ENCODE measurements at regions of chr2 and their contacts with region 1.

Region 1: DNA sequence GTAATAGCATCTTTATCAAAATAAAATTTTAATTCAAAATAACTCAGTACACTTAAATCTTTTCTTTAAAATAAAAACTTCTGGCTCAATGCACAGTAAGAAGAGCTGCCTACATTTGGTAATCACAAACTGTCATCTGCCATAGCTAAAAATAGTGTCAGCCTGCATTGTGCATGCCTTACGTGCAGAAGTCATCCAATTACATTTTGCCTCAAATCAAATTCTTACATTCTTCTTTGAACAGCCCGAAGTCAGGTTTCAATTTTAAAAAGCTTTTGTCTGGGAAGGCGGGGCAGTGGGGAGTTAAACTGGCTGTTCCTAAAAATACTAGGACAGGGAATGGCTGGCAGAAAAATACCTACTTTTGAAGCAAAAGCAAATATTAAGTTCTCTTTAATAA is 51.1 kb downstream of the RTN4 start:
- DNase-seq: no peak
- ATAC-seq: no peak
- H3K4me3 Mint-ChIP-seq: no peak overlapping the region
- H3K27ac Mint-ChIP-seq: no peak overlapping the region
- H3K4me1 Mint-ChIP-seq: peaks cover 73% of the 10 kb centered on the region
- H3K27me3 Mint-ChIP-seq: no peaks in the 10 kb centered on the region
- CTCF ChIP-seq: no peak

Region 2: GRCh38 chr2:54838585-54839035 is 160.6 kb before region 1 on chr2:
- CTCF ChIA-PET with region 1: no interaction called
- POLR2A ChIA-PET with region 1: no interaction called
- intact Hi-C with region 1: no loop called
- DNase-seq: peak; percentile 27
- ATAC-seq: peak; percentile 91
- H3K4me3 Mint-ChIP-seq: no peak overlapping the region
- H3K27ac Mint-ChIP-seq: no peak overlapping the region
- H3K4me1 Mint-ChIP-seq: peaks cover 4% of the 10 kb centered on the region
- H3K27me3 Mint-ChIP-seq: no peaks in the 10 kb centered on the region
- CTCF ChIP-seq: peak; percentile 58

Region 3: GRCh38 chr2:54986264-54986663 is 12.9 kb before region 1 on chr2:
- CTCF ChIA-PET with region 1: no interaction called
- POLR2A ChIA-PET with region 1: no interaction called
- intact Hi-C with region 1: loop called (anchors 1 kb)
- DNase-seq: no peak
- ATAC-seq: no peak
- H3K4me3 Mint-ChIP-seq: no peak overlapping the region
- H3K27ac Mint-ChIP-seq: no peak overlapping the region
- H3K4me1 Mint-ChIP-seq: peaks cover 3% of the 10 kb centered on the region
- H3K27me3 Mint-ChIP-seq: no peaks in the 10 kb centered on the region
- CTCF ChIP-seq: no peak

Region 4: DNA sequence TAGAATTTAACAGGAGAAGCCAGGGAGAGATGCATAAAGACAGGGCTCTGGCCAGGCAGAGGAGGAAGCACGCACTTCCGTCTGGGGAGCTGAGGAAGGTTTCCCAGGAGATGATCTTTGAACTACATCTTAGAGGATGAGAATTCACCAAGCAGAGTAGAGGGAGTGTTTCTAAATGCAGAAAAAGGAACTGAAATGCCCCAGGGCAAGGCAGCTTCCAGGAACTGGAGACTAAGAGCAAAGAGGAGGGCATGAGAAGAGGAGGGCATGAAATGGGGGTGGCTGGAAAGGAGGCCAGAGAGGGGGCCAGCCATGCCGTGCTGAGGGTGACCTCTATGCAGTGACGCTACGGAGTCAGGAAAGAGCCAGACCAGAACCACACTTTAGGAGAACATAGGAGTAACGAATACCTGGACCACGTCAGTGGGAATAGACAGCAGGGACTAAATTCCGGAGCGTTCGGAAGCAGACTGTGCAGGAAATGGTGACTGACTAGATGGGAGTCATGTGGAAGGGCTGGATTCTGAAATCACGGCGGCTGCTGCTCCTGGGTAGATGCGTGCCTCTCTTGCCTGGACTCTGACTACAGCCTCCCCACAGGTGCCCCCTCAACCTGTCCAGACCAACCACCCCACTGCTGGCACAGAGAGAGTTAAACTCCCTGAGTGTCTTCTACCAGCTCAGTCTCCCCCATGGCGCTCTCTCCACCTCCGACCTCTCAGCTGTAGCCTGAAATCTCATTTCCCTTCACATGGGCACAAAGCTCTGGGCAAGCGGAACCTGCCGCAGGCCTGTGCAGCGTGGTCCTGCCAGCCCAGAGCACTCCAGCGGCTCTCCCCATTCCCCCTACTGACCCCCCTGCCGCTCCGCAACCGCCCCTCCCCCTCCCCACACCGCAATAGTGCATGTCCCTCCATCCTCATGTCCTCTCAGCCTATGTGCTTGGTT is 138.1 kb after region 1 on chr2:
- CTCF ChIA-PET with region 1: no interaction called
- POLR2A ChIA-PET with region 1: no interaction called
- intact Hi-C with region 1: no loop called
- DNase-seq: no peak
- ATAC-seq: no peak
- H3K4me3 Mint-ChIP-seq: no peak overlapping the region
- H3K27ac Mint-ChIP-seq: peak overlapping the region; percentile 5
- H3K4me1 Mint-ChIP-seq: peaks cover 34% of the 10 kb centered on the region
- H3K27me3 Mint-ChIP-seq: no peaks in the 10 kb centered on the region
- CTCF ChIP-seq: no peak